CD14-positive monocyte (primary cell): ENCODE measurements at regions of chr11 and their contacts with region 1.

Region 1: GRCh38 chr11:75721855-75722668 is 4.4 kb downstream of the MOGAT2 start:
- DNase-seq: no peak
- H3K4me3 ChIP-seq: no peak overlapping the region
- H3K4me3 Mint-ChIP-seq: no peak overlapping the region
- H3K27ac ChIP-seq: no peak overlapping the region
- H3K27ac Mint-ChIP-seq: no peak overlapping the region
- H3K4me1 ChIP-seq: no peaks in the 10 kb centered on the region
- H3K4me1 Mint-ChIP-seq: no peaks in the 10 kb centered on the region
- H3K27me3 ChIP-seq: no peaks in the 10 kb centered on the region
- H3K27me3 Mint-ChIP-seq: peaks cover 0 to 4% (median 1%) of the 10 kb centered on the region in 3 donors
- CTCF ChIP-seq: no peak

Region 2: GRCh38 chr11:75667831-75668450 is 54.1 kb before region 1 on chr11:
- intact Hi-C with region 1: no loop called
- DNase-seq: peak in 1 of 3 donors; percentile 3
- H3K4me3 ChIP-seq: peak overlapping the region in 1 of 3 experiments; percentile 51
- H3K4me3 Mint-ChIP-seq: peak overlapping the region; percentile 73 to 91
- H3K27ac ChIP-seq: no peak overlapping the region
- H3K27ac Mint-ChIP-seq: peak overlapping the region in 1 of 7 donors; percentile 59
- H3K4me1 ChIP-seq: peaks cover 13 to 21% of the 10 kb centered on the region in 2 donors
- H3K4me1 Mint-ChIP-seq: peaks cover 14% of the 10 kb centered on the region
- H3K27me3 ChIP-seq: peaks cover 87 to 88% of the 10 kb centered on the region in 2 donors
- H3K27me3 Mint-ChIP-seq: peaks cover 75 to 90% (median 78%) of the 10 kb centered on the region in 3 donors
- CTCF ChIP-seq: no peak

Region 3: GRCh38 chr11:75743711-75744563 is 21.9 kb after region 1 on chr11:
- intact Hi-C with region 1: no loop called
- DNase-seq: no peak
- H3K4me3 ChIP-seq: no peak overlapping the region
- H3K4me3 Mint-ChIP-seq: no peak overlapping the region
- H3K27ac ChIP-seq: no peak overlapping the region
- H3K27ac Mint-ChIP-seq: no peak overlapping the region
- H3K4me1 ChIP-seq: no peaks in the 10 kb centered on the region
- H3K4me1 Mint-ChIP-seq: no peaks in the 10 kb centered on the region
- H3K27me3 ChIP-seq: no peaks in the 10 kb centered on the region
- H3K27me3 Mint-ChIP-seq: peaks cover 4 to 21% (median 4%) of the 10 kb centered on the region in 3 donors
- CTCF ChIP-seq: no peak

Region 4: GRCh38 chr11:75760710-75761493 is 38.8 kb after region 1 on chr11:
- intact Hi-C with region 1: loop called in 1 of 2 experiments (anchors 5 kb)
- DNase-seq: peak in 2 of 3 donors; percentile 66 to 67
- H3K4me3 ChIP-seq: no peak overlapping the region
- H3K4me3 Mint-ChIP-seq: peak overlapping the region in 1 of 2 donors; percentile 40
- H3K27ac ChIP-seq: no peak overlapping the region
- H3K27ac Mint-ChIP-seq: peak overlapping the region in 6 of 7 donors; percentile 33 to 76 (median 58)
- H3K4me1 ChIP-seq: peaks cover 36 to 47% of the 10 kb centered on the region in 2 donors
- H3K4me1 Mint-ChIP-seq: peaks cover 49% of the 10 kb centered on the region
- H3K27me3 ChIP-seq: no peaks in the 10 kb centered on the region
- H3K27me3 Mint-ChIP-seq: peaks cover 0 to 2% (median 0%) of the 10 kb centered on the region in 3 donors
- CTCF ChIP-seq: no peak

Region 5: GRCh38 chr11:75802913-75803820 is 81.1 kb after region 1 on chr11:
- intact Hi-C with region 1: loop called in 1 of 2 experiments (anchors 10 kb)
- DNase-seq: peak; percentile 66 to 76 (median 73)
- H3K4me3 ChIP-seq: no peak overlapping the region
- H3K4me3 Mint-ChIP-seq: no peak overlapping the region
- H3K27ac ChIP-seq: peak overlapping the region in 1 of 2 donors; percentile 22
- H3K27ac Mint-ChIP-seq: peak overlapping the region in 2 of 7 donors; percentile 48 to 87
- H3K4me1 ChIP-seq: peaks cover 24 to 32% of the 10 kb centered on the region in 2 donors
- H3K4me1 Mint-ChIP-seq: peaks cover 32% of the 10 kb centered on the region
- H3K27me3 ChIP-seq: no peaks in the 10 kb centered on the region
- H3K27me3 Mint-ChIP-seq: peaks cover 0 to 3% (median 0%) of the 10 kb centered on the region in 3 donors
- CTCF ChIP-seq: peak; percentile 92